PC-9 (cell line): ENCODE measurements at regions of chr4 and their contacts with region 1.

Region 1: DNA sequence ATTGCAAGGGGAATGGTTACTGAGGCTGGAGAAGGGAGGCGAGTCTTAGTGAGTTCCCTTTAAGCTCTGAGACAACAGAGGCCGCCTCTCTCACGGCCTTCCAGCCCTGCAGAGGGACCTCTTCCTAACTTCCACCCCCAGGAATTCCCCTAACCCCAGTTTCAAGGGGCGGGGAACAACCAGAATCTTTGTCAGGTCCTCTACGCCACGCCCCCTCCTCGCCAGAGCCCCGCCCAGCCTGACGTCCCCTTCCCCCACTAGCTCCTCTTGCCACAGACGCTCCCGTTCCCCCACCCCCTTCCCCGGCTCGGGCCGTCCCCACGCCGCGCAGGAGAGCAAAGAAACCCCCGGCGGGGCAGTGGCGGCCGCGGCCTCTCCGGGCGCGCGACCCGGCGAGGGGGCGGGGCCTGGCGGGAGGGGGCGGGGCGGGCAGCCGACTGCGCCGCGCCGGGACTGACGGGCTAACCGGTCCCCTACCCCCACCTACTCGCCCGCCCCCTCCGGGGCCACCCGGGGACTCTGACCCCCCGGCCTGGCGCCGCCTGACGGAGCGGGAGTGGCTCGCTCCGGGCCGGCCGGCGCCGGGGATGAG is 12.3 kb upstream of the TMEM156 start:
- DNase-seq: peak; percentile 86 to 94
- H3K4me3 ChIP-seq: peak overlapping the region; percentile 85
- H3K27ac ChIP-seq: peak overlapping the region; percentile 98
- H3K4me1 ChIP-seq: peaks cover 53% of the 10 kb centered on the region
- H3K27me3 ChIP-seq: no peaks in the 10 kb centered on the region
- CTCF ChIP-seq: no peak

Region 2: GRCh38 chr4:38867478-38868058 is 176.9 kb before region 1 on chr4 and contains the start of gene FAM114A1:
- CTCF ChIA-PET with region 1: no interaction called
- POLR2A ChIA-PET with region 1: no interaction called
- intact Hi-C with region 1: loop called (anchors 5 kb)
- DNase-seq: peak; percentile 50 to 86
- H3K4me3 ChIP-seq: peak within 1 kb of the TSS; percentile 55
- H3K27ac ChIP-seq: peak within 1 kb of the TSS; percentile 41; the same call in 1 of the 2 replicates
- H3K4me1 ChIP-seq: peaks cover 23% of the 10 kb centered on the region
- H3K27me3 ChIP-seq: no peaks in the 10 kb centered on the region
- CTCF ChIP-seq: no peak
- total RNA-seq, gene FAM114A1: 73.7 and 80.4 TPM in 2 replicates

Region 3: DNA sequence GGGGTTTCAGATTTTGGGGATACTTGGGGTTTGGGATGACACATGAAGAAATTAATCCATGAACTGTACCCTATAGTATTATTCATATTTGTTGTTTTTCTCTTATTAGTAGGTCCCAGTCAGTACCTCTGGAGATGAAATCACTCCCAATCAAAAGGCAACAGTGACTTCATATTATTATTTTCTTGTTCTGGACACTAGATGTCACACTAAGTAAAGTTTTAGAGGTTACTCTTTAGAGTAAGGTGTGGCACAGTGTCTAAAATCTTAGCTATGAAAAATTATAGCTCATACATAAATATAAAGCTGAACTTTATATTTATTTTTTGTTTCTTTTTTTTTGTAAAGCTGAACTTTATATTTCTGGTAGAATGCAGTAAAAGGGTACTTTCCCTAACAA is 141.8 kb before region 1 on chr4:
- CTCF ChIA-PET with region 1: no interaction called
- POLR2A ChIA-PET with region 1: interaction called, 11 read pairs
- intact Hi-C with region 1: no loop called
- DNase-seq: peak in 1 of 2 experiments; percentile 43
- H3K4me3 ChIP-seq: no peak overlapping the region
- H3K27ac ChIP-seq: no peak overlapping the region
- H3K4me1 ChIP-seq: no peaks in the 10 kb centered on the region
- H3K27me3 ChIP-seq: no peaks in the 10 kb centered on the region
- CTCF ChIP-seq: peak; percentile 63

Region 4: GRCh38 chr4:38948551-38948950 is 95.9 kb before region 1 on chr4:
- CTCF ChIA-PET with region 1: interaction called, 3 read pairs
- POLR2A ChIA-PET with region 1: interaction called, 6 read pairs
- intact Hi-C with region 1: loop called (anchors 2 kb)
- DNase-seq: peak; percentile 38 to 87
- H3K4me3 ChIP-seq: no peak overlapping the region
- H3K27ac ChIP-seq: peak overlapping the region; percentile 75
- H3K4me1 ChIP-seq: peaks cover 23% of the 10 kb centered on the region
- H3K27me3 ChIP-seq: no peaks in the 10 kb centered on the region
- CTCF ChIP-seq: no peak

Region 5: GRCh38 chr4:39032218-39033085 is 12.0 kb before region 1 on chr4 and contains the start of gene TMEM156:
- CTCF ChIA-PET with region 1: interaction called, 4 read pairs
- POLR2A ChIA-PET with region 1: interaction called, 8 read pairs
- intact Hi-C with region 1: loop called (anchors 1 kb)
- DNase-seq: peak; percentile 26 to 93
- H3K4me3 ChIP-seq: peak within 1 kb of the TSS; percentile 71
- H3K27ac ChIP-seq: peak within 1 kb of the TSS; percentile 98
- H3K4me1 ChIP-seq: peaks cover 68% of the 10 kb centered on the region
- H3K27me3 ChIP-seq: no peaks in the 10 kb centered on the region
- CTCF ChIP-seq: no peak
- total RNA-seq, gene TMEM156: 20.1 and 29.3 TPM in 2 replicates